Activated T-helper 1 cell treated with anti-CD3 and anti-CD28 coated beads, Interleukin-12 subunit alpha, Interleukin-12 subunit beta, Interleukin-2, Interleukin-4 antibody, amounts not matched to agents 30 ng/mL and 10 ng/mL and 1 ng/mL, durations not matched to agents 14 hours and 24 hours and 36 hours (primary cell): ENCODE measurements at regions of chr1 and their contacts with region 1.

Region 1: GRCh38 chr1:228165372-228166169 is at the start of gene IBA57:
- DNase-seq: peak; percentile 99
- H3K4me3 Mint-ChIP-seq: peak within 1 kb of the TSS; percentile 86
- H3K27ac Mint-ChIP-seq: peak within 1 kb of the TSS; percentile 94
- H3K4me1 Mint-ChIP-seq: peaks cover 21% of the 10 kb centered on the region
- H3K27me3 Mint-ChIP-seq: no peaks in the 10 kb centered on the region
- total RNA-seq, gene IBA57: 7.5 and 8.1 TPM in 2 replicates

Region 2: DNA sequence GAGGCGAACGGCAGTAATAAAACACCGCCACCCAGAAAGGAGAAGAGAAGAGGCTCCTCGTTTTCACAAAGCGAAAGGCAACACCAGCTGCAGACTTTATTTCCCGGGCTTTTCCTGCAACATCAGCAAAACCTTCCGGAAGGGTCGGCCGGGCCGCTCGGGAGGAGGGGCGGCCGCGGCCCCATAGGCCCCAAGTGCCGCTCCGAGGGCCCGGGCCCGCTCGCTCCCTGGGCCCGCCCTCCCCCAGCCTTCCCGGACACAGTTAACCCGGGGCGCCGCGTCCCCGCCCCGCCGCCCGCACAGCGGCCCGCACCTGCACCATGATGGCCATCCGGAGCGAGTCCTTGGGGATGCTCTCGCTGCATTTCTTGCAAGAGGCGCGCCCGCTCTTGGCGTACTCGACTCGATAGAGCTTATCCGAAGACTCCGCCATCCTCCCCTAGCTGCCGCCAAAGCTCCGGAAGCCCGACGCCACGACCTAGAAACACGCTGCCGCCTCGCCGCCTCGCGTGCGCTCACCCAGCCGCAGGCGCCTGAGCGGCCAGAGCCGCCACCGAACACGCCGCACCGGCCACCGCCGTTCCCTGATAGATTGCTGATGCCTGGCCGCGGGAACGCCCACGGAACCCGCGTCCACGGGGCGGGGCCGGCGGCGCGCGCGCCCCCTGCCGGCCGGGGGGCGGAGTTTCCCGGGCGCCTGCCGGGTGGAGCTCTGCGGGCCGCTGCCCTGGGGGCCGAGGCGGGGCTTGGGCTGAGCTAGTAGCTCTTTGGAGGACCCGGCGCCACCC is 1757.9 kb before region 1 on chr1 and contains the start of gene PARP1:
- intact Hi-C with region 1: loop called (anchors 10 kb)
- DNase-seq: peak; percentile 90
- H3K4me3 Mint-ChIP-seq: peak within 1 kb of the TSS; percentile 99
- H3K27ac Mint-ChIP-seq: peak within 1 kb of the TSS; percentile 97
- H3K4me1 Mint-ChIP-seq: peaks cover 44% of the 10 kb centered on the region
- H3K27me3 Mint-ChIP-seq: peaks cover 8% of the 10 kb centered on the region
- total RNA-seq, gene PARP1: 209 and 220 TPM in 2 replicates

Region 3: DNA sequence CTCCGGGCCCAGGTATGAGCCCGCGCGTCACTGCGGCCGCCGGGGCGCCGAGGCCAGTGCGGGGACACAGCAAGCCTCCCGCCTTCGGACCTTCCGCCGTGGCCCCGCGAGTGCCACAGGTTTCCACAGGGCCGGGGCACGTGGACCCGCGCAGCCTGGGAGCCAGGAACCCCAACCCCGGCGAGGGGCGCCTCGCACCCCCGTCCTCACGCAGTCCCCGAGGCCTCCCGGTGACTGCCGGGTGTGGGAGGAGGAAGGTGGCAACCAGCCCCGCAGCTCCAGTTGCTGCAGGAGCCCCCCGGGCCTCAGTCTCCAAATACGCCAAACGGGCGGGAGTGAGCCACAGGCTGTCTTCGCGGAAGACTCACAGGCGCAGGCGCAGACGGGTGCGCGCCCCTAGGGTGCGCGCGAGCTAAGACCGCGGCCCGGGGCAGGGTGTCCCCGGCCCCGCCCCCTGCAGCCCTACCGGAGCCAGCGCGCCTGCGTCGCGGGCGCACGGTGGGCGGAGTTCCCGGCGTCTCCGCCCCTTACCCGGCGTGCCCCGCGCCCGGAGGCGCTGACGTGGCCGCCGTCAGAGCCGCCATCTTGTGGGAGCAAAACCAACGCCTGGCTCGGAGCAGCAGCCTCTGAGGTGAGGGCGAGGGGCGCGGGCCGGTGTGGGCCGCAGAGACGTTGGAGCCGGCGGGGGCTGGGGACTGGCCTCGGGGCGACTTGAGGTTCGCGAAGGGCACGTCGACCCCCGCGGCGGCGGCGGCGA is 83.3 kb before region 1 on chr1 and contains the start of gene ARF1:
- intact Hi-C with region 1: loop called (anchors 1 kb)
- DNase-seq: peak; percentile 91
- H3K4me3 Mint-ChIP-seq: peak within 1 kb of the TSS; percentile 97
- H3K27ac Mint-ChIP-seq: peak within 1 kb of the TSS; percentile 91
- H3K4me1 Mint-ChIP-seq: peaks cover 37% of the 10 kb centered on the region
- H3K27me3 Mint-ChIP-seq: no peaks in the 10 kb centered on the region
- total RNA-seq, gene ARF1: 404 TPM in 2 replicates

Region 4: GRCh38 chr1:228131766-228132165 is 33.8 kb before region 1 on chr1:
- intact Hi-C with region 1: loop called (anchors 1 kb)
- DNase-seq: no peak
- H3K4me3 Mint-ChIP-seq: no peak overlapping the region
- H3K27ac Mint-ChIP-seq: no peak overlapping the region
- H3K4me1 Mint-ChIP-seq: peaks cover 9% of the 10 kb centered on the region
- H3K27me3 Mint-ChIP-seq: peaks cover 24% of the 10 kb centered on the region

Region 5: GRCh38 chr1:228275739-228276421 is 110.3 kb after region 1 on chr1:
- intact Hi-C with region 1: loop called (anchors 1 kb)
- DNase-seq: peak; percentile 83
- H3K4me3 Mint-ChIP-seq: peak overlapping the region; percentile 73
- H3K27ac Mint-ChIP-seq: no peak overlapping the region
- H3K4me1 Mint-ChIP-seq: peaks cover 8% of the 10 kb centered on the region
- H3K27me3 Mint-ChIP-seq: no peaks in the 10 kb centered on the region

Region 6: DNA sequence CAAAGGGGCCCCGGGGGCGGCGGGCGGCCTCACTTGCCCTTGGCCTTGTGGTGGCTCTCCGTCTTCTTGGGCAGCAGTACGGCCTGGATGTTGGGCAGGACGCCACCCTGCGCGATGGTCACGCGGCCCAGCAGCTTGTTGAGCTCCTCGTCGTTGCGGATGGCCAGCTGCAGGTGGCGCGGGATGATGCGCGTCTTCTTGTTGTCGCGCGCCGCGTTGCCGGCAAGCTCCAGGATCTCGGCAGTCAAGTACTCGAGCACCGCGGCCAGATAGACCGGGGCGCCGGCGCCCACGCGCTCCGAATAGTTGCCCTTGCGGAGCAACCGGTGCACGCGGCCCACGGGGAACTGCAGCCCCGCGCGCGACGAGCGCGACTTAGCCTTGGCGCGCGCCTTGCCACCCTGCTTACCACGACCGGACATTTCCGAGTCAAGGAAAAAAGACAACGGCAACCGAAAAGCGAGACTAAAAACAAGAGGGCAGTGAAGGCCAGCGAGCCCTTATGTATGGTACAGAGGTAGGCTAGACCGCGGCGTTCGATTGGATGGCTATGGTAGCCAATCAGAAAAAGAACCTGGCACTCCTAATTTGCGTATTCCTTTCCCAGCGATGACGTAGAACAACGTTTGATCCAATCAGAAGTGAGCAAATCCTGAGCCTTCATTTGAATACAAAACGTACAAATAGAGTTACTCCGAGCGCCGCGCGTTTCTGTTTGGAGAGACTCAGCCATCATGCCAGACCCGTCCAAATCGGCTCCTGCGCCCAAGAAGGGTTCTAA is 292.0 kb after region 1 on chr1:
- intact Hi-C with region 1: loop called (anchors 1 kb)
- DNase-seq: peak; percentile 89
- H3K4me3 Mint-ChIP-seq: peak overlapping the region; percentile 99
- H3K27ac Mint-ChIP-seq: peak overlapping the region; percentile 100
- H3K4me1 Mint-ChIP-seq: peaks cover 59% of the 10 kb centered on the region
- H3K27me3 Mint-ChIP-seq: peaks cover 2% of the 10 kb centered on the region

Region 7: GRCh38 chr1:229625915-229626831 is 1460.6 kb after region 1 on chr1 and contains the starts of genes TAF5L and URB2:
- intact Hi-C with region 1: loop called (anchors 5 kb)
- DNase-seq: peak; percentile 87
- H3K4me3 Mint-ChIP-seq: peak within 1 kb of the TSS; percentile 97
- H3K27ac Mint-ChIP-seq: peak within 1 kb of the TSS; percentile 95
- H3K4me1 Mint-ChIP-seq: peaks cover 59% of the 10 kb centered on the region
- H3K27me3 Mint-ChIP-seq: no peaks in the 10 kb centered on the region
- total RNA-seq, gene TAF5L: 35.8 and 37.9 TPM in 2 replicates
- total RNA-seq, gene URB2: 37.3 and 38.4 TPM in 2 replicates